GM12878 (cell line): ENCODE measurements at regions of chr14 and their contacts with region 1.

Region 1: DNA sequence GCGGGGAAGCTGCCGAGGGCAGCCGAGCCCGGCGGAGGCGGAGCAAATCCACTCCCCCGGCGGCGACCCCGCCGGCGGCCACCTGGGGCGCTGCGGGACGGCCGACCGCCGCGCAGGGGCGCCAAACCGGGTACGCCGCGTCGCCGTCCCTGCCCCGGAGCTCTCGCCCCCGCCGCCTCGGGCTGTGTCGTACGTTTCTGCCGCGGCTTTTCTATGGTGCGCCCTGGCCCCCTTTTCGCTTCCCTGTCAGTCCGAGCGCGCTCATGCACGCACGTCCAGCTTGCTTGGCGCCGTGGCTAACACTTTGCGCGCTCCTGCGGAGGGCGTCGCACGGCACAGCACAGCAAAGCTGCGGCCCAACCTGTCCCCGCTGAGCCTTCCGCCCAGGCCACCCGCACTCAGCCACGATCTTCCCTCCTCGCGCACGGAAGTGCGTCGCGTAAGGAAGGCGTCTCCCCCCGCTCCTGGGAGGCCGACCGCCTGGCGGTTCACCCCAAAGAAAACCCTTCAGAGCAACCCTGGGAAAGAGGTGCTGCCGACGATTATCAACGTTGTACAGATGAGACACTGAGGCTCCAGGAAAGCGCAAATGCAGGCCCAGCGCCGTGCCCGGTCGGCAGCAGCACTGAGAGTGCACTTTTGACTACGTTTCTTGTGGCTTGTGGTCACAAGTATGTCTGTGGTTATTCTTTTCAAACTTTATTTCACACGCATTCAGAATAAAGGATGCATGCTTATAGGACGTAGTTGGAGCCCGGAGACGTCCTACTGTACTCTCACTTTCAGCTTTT is at the start of gene HECTD1:
- DNase-seq: peak; percentile 67
- ATAC-seq: peak; percentile 82
- H3K4me3 ChIP-seq: peak within 1 kb of the TSS; percentile 90
- H3K27ac ChIP-seq: peak within 1 kb of the TSS; percentile 97
- H3K4me1 ChIP-seq: peaks cover 8% of the 10 kb centered on the region; the same call in 1 of the 2 replicates
- H3K27me3 ChIP-seq: no peaks in the 10 kb centered on the region
- CTCF ChIP-seq: peak; percentile 52 to 81 (median 78); a peak in 5 of 6 replicates
- EP300 ChIP-seq: peak in 1 of 2 experiments; percentile 69; a peak in 3 of 4 replicates
- POLR2A ChIP-seq: peak; percentile 95
- RAD21 ChIP-seq: peak; percentile 42
- polyA plus RNA-seq, gene HECTD1: 27.3 to 27.4 TPM

Region 2: GRCh38 chr14:31127690-31128089 is 80.3 kb before region 1 on chr14:
- CTCF ChIA-PET with region 1: no interaction called
- POLR2A ChIA-PET with region 1: no interaction called
- RAD21 ChIA-PET with region 1: interaction called, 10 read pairs
- SMC1A ChIA-PET with region 1: interaction called, 4 read pairs
- in situ Hi-C with region 1: no loop called
- intact Hi-C with region 1: no loop called
- DNase-seq: no peak
- ATAC-seq: peak; percentile 90
- H3K4me3 ChIP-seq: no peak overlapping the region
- H3K27ac ChIP-seq: no peak overlapping the region
- H3K4me1 ChIP-seq: peaks cover 11% of the 10 kb centered on the region
- H3K27me3 ChIP-seq: no peaks in the 10 kb centered on the region
- CTCF ChIP-seq: no peak
- EP300 ChIP-seq: peak; percentile 68 to 75; a peak in 2 of 4 replicates
- POLR2A ChIP-seq: no peak
- RAD21 ChIP-seq: no peak

Region 3: DNA sequence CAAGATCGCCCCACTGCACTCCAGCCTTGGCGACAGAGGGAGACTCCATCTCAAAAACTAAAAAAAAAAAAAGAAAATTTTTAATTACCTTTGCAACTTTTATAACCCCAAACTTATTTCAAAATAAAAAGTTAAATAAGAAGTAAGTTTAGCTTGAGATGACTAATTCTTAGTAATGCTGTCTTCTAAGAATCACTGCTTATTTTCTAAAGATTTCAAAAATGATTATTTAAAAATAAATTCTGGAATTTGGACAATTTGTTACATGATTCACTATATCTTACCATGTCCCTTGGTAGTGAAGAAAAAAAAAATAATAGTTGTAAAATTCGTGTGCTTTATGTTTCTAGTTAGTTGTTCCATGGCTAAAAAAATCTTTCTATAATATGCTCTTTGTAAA is 11.2 kb after region 1 on chr14:
- CTCF ChIA-PET with region 1: interaction called, 12 read pairs
- POLR2A ChIA-PET with region 1: no interaction called
- RAD21 ChIA-PET with region 1: no interaction called
- SMC1A ChIA-PET with region 1: interaction called, 3 read pairs
- in situ Hi-C with region 1: no loop called
- intact Hi-C with region 1: no loop called
- DNase-seq: no peak
- ATAC-seq: no peak
- H3K4me3 ChIP-seq: no peak overlapping the region
- H3K27ac ChIP-seq: no peak overlapping the region
- H3K4me1 ChIP-seq: no peaks in the 10 kb centered on the region
- H3K27me3 ChIP-seq: no peaks in the 10 kb centered on the region
- CTCF ChIP-seq: no peak
- EP300 ChIP-seq: no peak
- POLR2A ChIP-seq: no peak
- RAD21 ChIP-seq: no peak

Region 4: DNA sequence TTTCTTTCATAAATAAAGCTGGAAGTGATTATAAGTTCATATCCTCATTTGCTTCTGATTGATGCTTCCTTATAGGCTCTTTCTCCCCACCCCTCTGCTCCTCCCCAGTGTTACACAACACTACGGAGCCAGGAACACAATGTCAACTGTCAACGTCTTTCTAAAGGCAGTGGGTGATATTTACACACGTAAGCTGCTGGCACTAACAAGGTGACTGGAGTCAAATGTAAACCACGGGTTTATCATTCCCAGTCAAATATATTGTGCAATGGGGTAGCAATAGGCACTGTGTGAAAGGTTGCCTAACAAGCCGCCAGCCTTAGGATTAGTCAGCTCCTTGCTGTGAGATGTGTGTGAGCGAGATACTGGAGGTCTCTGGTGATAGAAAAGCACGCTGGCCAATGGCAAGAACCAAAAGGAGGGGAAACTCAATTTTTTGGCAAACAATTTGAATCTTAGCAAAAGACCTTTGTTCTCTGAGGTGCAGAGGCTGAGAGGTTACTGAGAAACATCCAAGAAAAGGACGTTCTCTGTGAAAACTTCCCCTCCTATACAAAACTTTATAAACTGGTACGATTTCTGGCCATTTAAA is 21.8 kb after region 1 on chr14:
- CTCF ChIA-PET with region 1: interaction called, 5 read pairs
- POLR2A ChIA-PET with region 1: no interaction called
- RAD21 ChIA-PET with region 1: interaction called, 4 read pairs
- SMC1A ChIA-PET with region 1: interaction called, 11 read pairs
- in situ Hi-C with region 1: no loop called
- intact Hi-C with region 1: no loop called
- DNase-seq: no peak
- ATAC-seq: no peak
- H3K4me3 ChIP-seq: no peak overlapping the region
- H3K27ac ChIP-seq: no peak overlapping the region
- H3K4me1 ChIP-seq: peaks cover 17% of the 10 kb centered on the region
- H3K27me3 ChIP-seq: no peaks in the 10 kb centered on the region
- CTCF ChIP-seq: no peak
- EP300 ChIP-seq: no peak
- POLR2A ChIP-seq: no peak
- RAD21 ChIP-seq: no peak

Region 5: DNA sequence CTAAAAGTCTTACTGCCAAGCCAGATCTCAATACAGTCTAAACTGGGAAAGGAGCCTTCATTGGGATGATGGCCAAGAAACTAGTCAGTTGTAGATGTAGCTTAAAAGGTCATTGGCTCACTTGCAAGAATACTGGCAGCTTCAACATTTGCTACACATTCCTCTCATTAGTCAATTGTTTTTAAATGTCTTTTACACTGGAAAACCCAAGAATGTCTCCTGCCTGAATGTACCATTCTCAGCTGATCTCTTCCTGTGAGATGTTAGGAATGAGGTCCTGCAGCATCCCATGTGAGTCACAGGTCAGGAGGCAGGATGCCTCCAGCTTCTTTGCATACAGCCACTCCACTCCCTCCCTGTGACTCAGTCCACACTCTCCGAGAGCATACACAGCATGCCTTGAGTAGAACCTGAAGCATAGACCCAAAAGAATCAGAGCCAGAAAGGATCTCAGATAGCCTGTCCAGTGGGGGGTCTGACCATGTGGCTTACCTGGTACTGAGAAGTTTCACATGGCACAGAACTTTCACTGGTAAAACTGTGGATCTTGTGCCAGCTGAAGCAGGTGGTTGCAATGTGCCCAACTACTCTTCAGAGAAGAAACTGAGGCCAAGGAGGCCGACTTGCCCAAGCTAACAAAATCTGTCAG is 55.7 kb after region 1 on chr14:
- CTCF ChIA-PET with region 1: interaction called, 3 read pairs
- POLR2A ChIA-PET with region 1: interaction called, 5 read pairs
- RAD21 ChIA-PET with region 1: interaction called, 10 read pairs
- SMC1A ChIA-PET with region 1: interaction called, 3 read pairs
- in situ Hi-C with region 1: no loop called
- intact Hi-C with region 1: no loop called
- DNase-seq: no peak
- ATAC-seq: no peak
- H3K4me3 ChIP-seq: no peak overlapping the region
- H3K27ac ChIP-seq: no peak overlapping the region
- H3K4me1 ChIP-seq: peaks cover 11% of the 10 kb centered on the region
- H3K27me3 ChIP-seq: no peaks in the 10 kb centered on the region
- CTCF ChIP-seq: no peak
- EP300 ChIP-seq: no peak
- POLR2A ChIP-seq: no peak
- RAD21 ChIP-seq: no peak

Region 6: GRCh38 chr14:31360919-31361662 is 153.1 kb after region 1 on chr14:
- CTCF ChIA-PET with region 1: no interaction called
- POLR2A ChIA-PET with region 1: no interaction called
- RAD21 ChIA-PET with region 1: no interaction called
- SMC1A ChIA-PET with region 1: interaction called, 4 read pairs
- in situ Hi-C with region 1: no loop called
- intact Hi-C with region 1: loop called (anchors 1 kb)
- DNase-seq: no peak
- ATAC-seq: no peak
- H3K4me3 ChIP-seq: no peak overlapping the region
- H3K27ac ChIP-seq: no peak overlapping the region
- H3K4me1 ChIP-seq: no peaks in the 10 kb centered on the region; the same call in 1 of the 2 replicates
- H3K27me3 ChIP-seq: no peaks in the 10 kb centered on the region
- CTCF ChIP-seq: no peak
- EP300 ChIP-seq: no peak
- POLR2A ChIP-seq: no peak
- RAD21 ChIP-seq: no peak

Region 7: GRCh38 chr14:31420319-31421111 is 212.6 kb after region 1 on chr14 and contains the start of gene HEATR5A:
- CTCF ChIA-PET with region 1: no interaction called
- POLR2A ChIA-PET with region 1: interaction called, 6 read pairs
- RAD21 ChIA-PET with region 1: interaction called, 5 read pairs
- SMC1A ChIA-PET with region 1: interaction called, 3 read pairs
- in situ Hi-C with region 1: no loop called
- intact Hi-C with region 1: loop called (anchors 5 kb)
- DNase-seq: peak; percentile 69
- ATAC-seq: peak; percentile 97
- H3K4me3 ChIP-seq: peak within 1 kb of the TSS; percentile 91
- H3K27ac ChIP-seq: peak within 1 kb of the TSS; percentile 67
- H3K4me1 ChIP-seq: no peaks in the 10 kb centered on the region
- H3K27me3 ChIP-seq: no peaks in the 10 kb centered on the region
- CTCF ChIP-seq: peak in 2 of 3 experiments; percentile 20 to 27; a peak in 3 of 6 replicates
- EP300 ChIP-seq: no peak; a peak in 1 of 4 replicates
- POLR2A ChIP-seq: peak; percentile 100
- RAD21 ChIP-seq: no peak
- polyA plus RNA-seq, gene HEATR5A: 25.4 to 37.1 TPM